ENCODE measurements at regions of chr1 and their contacts with region 1.

Region 1: DNA sequence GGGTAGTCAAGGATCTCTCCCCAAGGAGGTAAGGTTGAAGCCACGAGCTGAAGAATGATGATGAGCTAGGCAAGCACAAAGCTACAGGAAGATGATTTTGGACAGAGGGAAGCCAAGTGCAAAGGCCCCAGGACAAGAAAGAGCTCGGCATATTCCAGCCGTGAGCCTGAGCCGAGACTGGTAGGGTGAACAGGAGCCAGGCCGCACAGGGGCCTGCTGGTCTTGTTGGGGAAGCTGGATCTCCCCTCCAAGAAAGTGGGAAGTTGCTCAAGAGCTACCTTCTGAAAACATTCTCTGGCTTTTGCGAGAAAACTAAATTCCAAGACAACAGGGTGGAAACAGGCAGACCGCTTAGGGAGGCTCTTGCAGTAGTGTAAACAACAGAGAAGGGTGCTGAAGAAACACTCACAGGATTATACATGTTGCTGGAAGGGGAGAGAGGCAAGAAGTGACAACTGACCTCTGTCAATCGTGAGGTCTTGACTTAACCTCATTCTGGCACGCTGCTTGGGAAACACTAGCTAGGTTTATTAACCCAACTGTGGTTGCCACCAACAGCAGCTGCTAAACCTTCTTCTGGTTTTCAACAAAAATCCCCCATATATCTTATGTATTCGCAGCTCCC is 625.2 kb downstream of the SMYD3 start:
- DNase-seq: no peak
- ATAC-seq: no peak
- H3K4me3 ChIP-seq: no peak overlapping the region
- H3K27ac ChIP-seq: no peak overlapping the region
- H3K4me1 ChIP-seq: peaks cover 0 to 10% (median 0%) of the 10 kb centered on the region in 9 donors
- H3K27me3 ChIP-seq: no peaks in the 10 kb centered on the region
- CTCF ChIP-seq: no peak

Region 2: DNA sequence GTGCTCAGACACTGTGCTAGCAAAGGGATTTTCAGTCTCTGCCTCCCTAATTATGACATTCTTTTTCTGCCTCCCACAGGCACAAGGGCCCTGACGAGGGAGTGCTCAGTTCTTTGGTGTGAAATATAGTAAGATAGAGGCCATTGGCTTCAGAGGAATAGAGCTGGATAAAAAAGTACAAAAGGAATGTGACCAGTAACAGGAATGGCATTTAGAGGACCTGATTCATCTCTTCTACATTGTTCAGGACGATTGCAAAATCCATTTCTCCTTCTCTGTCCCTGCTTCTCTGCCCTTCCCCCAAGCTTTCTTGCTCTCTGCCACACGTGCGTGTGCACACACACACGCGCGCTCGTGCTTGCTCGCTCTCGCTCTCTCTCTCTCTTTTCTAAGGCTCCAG is 58.9 kb before region 1 on chr1:
- intact Hi-C with region 1: no loop called
- DNase-seq: no peak
- ATAC-seq: peak in 1 of 8 donors; percentile 88
- H3K4me3 ChIP-seq: no peak overlapping the region
- H3K27ac ChIP-seq: peak overlapping the region in 1 of 10 donors; percentile 47
- H3K4me1 ChIP-seq: no peaks in the 10 kb centered on the region
- H3K27me3 ChIP-seq: no peaks in the 10 kb centered on the region
- CTCF ChIP-seq: no peak

Region 3: GRCh38 chr1:245856944-245857531 is 24.8 kb before region 1 on chr1:
- intact Hi-C with region 1: loop called in 1 of 10 experiments (anchors 1 kb)
- DNase-seq: no peak
- ATAC-seq: no peak
- H3K4me3 ChIP-seq: no peak overlapping the region
- H3K27ac ChIP-seq: no peak overlapping the region
- H3K4me1 ChIP-seq: peaks cover 0 to 27% (median 13%) of the 10 kb centered on the region in 9 donors
- H3K27me3 ChIP-seq: no peaks in the 10 kb centered on the region
- CTCF ChIP-seq: no peak

Region 4: GRCh38 chr1:246117066-246117791 is 235.3 kb after region 1 on chr1:
- intact Hi-C with region 1: no loop called
- DNase-seq: peak in 1 of 2 donors; percentile 21
- ATAC-seq: peak in 4 of 8 donors; percentile 59 to 73 (median 64)
- H3K4me3 ChIP-seq: no peak overlapping the region
- H3K27ac ChIP-seq: no peak overlapping the region
- H3K4me1 ChIP-seq: peaks cover 0 to 10% (median 0%) of the 10 kb centered on the region in 9 donors
- H3K27me3 ChIP-seq: no peaks in the 10 kb centered on the region
- CTCF ChIP-seq: peak in 7 of 9 donors; percentile 35 to 66 (median 57)

Measured in heart right ventricle (tissue), 16 donors.